Testis (tissue), 5 donors: ENCODE measurements at regions of chr1 and their contacts with region 1.

Region 1: GRCh38 chr1:154479764-154480421 is 22.1 kb upstream of the TDRD10 start:
- DNase-seq: peak; percentile 85
- H3K4me3 ChIP-seq: no peak overlapping the region
- H3K27ac ChIP-seq: peak overlapping the region in 1 of 2 donors; percentile 11
- H3K4me1 ChIP-seq: peaks cover 38% of the 10 kb centered on the region
- H3K27me3 ChIP-seq: no peaks in the 10 kb centered on the region
- CTCF ChIP-seq: peak; percentile 88 to 95 (median 91)
- POLR2A ChIP-seq: no peak

Region 2: GRCh38 chr1:154404984-154405761 is 74.7 kb before region 1 on chr1 and contains the start of gene IL6R:
- intact Hi-C with region 1: loop called (anchors 10 kb)
- DNase-seq: peak; percentile 88
- H3K4me3 ChIP-seq: peak within 1 kb of the TSS; percentile 58 to 77
- H3K27ac ChIP-seq: peak within 1 kb of the TSS; percentile 88 to 89
- H3K4me1 ChIP-seq: peaks cover 30% of the 10 kb centered on the region
- H3K27me3 ChIP-seq: no peaks in the 10 kb centered on the region
- CTCF ChIP-seq: peak; percentile 28 to 39 (median 31)
- POLR2A ChIP-seq: no peak
- total RNA-seq, gene IL6R: 25.0 to 29.7 TPM

Region 3: GRCh38 chr1:154546264-154547063 is 66.6 kb after region 1 on chr1:
- intact Hi-C with region 1: loop called (anchors 10 kb)
- DNase-seq: peak; percentile 66
- H3K4me3 ChIP-seq: no peak overlapping the region
- H3K27ac ChIP-seq: no peak overlapping the region
- H3K4me1 ChIP-seq: peaks cover 10% of the 10 kb centered on the region
- H3K27me3 ChIP-seq: no peaks in the 10 kb centered on the region
- CTCF ChIP-seq: peak; percentile 52 to 71 (median 66)
- POLR2A ChIP-seq: no peak